ENCODE measurements at regions of chr10 and their contacts with region 1.

Region 1: GRCh38 chr10:91298224-91298871 is 77.9 kb downstream of the PCGF5 start:
- DNase-seq: peak; percentile 86
- ATAC-seq: peak; percentile 95
- H3K4me3 Mint-ChIP-seq: peak overlapping the region; percentile 59
- H3K27ac Mint-ChIP-seq: no peak overlapping the region
- H3K4me1 Mint-ChIP-seq: peaks cover 9% of the 10 kb centered on the region
- H3K27me3 Mint-ChIP-seq: peaks cover 9% of the 10 kb centered on the region
- CTCF ChIP-seq: peak; percentile 92

Region 2: DNA sequence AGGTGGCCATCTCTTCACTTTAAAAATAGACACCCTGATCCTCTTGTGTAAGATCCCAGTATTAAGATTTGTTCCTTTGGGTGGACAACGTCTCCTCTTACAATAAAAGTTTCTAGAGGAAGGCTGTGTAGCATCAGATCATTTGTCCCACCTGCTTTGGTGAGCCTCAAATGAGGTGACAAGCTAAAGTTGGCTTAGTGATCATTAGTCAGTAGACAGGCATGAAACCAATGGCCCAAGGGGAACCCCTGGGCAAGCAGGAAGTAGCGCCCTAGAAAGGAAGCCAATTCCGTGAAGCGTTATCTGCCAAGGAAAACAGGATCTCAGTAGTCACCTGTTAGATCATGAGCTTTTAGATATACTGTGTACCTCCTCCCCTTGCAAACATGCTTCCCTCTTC is 11.1 kb before region 1 on chr10:
- CTCF ChIA-PET with region 1: interaction called, 35 read pairs
- POLR2A ChIA-PET with region 1: interaction called, 3 read pairs
- intact Hi-C with region 1: no loop called
- DNase-seq: no peak
- ATAC-seq: no peak
- H3K4me3 Mint-ChIP-seq: no peak overlapping the region
- H3K27ac Mint-ChIP-seq: no peak overlapping the region
- H3K4me1 Mint-ChIP-seq: no peaks in the 10 kb centered on the region
- H3K27me3 Mint-ChIP-seq: no peaks in the 10 kb centered on the region
- CTCF ChIP-seq: no peak

Region 3: DNA sequence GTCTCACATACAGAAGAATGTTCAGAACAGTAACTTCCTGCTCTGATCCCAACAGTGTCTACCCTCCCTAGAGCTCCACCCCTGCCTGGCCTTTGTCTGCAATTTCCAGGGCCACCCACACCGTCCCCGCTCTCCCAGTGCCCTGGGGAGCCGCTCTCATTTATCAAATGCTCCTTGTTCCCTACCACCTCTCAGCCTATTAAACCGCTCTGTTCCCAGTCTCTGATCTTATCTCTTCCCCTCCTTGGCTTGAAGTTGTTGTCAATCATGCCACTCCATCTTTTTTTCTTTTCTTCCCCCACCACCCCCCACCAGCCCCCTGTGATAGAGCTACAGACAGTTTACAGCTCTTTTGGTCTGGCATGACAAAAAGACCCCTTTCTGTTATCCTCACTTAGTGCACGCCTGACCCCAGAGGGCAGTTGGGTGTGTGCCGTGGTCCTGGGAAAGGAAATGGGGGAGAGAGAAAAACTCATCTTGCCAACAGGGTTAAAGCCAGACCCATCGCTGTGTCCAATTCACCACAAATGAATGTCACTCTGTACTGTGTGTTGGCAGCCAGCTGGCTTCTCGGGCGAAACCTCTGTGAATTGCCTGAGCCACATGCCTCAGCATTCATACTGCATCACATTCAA is 83.0 kb after region 1 on chr10:
- CTCF ChIA-PET with region 1: interaction called, 28 read pairs
- POLR2A ChIA-PET with region 1: no interaction called
- intact Hi-C with region 1: loop called (anchors 5 kb)
- DNase-seq: no peak
- ATAC-seq: no peak
- H3K4me3 Mint-ChIP-seq: no peak overlapping the region
- H3K27ac Mint-ChIP-seq: no peak overlapping the region
- H3K4me1 Mint-ChIP-seq: peaks cover 26% of the 10 kb centered on the region
- H3K27me3 Mint-ChIP-seq: peaks cover 34% of the 10 kb centered on the region
- CTCF ChIP-seq: no peak

Region 4: DNA sequence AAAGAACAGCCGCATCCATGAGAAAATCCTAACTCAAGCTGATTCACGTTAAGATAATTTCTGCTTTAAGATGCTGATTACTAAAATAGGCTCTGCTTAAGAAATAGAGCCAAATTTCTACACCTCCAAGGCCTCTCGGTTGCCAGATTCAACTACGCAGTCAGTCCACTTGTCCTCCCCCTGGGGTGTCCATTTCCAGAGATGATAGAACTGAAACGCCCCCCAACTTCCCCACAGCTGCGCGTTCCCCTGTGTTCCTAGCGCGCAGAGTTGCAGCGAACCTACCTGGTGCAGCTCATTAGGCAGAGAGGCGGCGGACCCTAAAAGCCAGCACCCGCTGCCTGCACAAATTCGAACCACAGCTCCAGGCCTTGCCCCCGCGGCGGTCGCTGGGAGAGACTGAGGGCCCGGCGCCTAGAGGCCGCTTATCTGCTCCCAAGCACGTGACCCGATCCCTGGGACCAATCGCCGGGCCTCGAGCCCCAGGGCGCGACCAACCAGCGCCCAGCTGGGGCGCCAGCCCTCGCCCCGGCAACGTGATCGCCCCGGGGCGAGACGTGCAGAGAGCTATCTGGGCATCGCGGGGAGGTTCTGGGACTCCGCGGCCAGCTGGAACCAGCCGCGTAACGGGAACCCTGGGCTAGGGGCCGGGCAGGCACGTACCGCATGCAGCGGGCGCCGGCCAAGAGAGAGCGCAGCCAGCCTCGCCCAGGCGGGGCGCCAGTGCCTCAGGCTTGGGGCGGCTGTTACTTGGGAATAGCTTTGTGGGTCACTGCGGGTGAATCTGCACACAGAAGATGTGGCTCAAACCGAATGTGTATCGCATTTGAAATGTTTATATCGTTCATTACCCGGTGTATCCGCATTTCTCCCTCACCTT is 334.6 kb after region 1 on chr10 and contains the start of gene PPP1R3C:
- CTCF ChIA-PET with region 1: interaction called, 139 read pairs
- POLR2A ChIA-PET with region 1: no interaction called
- intact Hi-C with region 1: loop called (anchors 5 kb)
- DNase-seq: peak; percentile 70
- ATAC-seq: peak; percentile 87
- H3K4me3 Mint-ChIP-seq: peak within 1 kb of the TSS; percentile 70
- H3K27ac Mint-ChIP-seq: no peak within 1 kb of the TSS
- H3K4me1 Mint-ChIP-seq: peaks cover 4% of the 10 kb centered on the region
- H3K27me3 Mint-ChIP-seq: peaks cover 55% of the 10 kb centered on the region
- CTCF ChIP-seq: no peak
- total RNA-seq, gene PPP1R3C: 0.94 to 0.99 TPM

Region 5: GRCh38 chr10:91908337-91909116 is 610.2 kb after region 1 on chr10:
- CTCF ChIA-PET with region 1: interaction called, 32 read pairs
- POLR2A ChIA-PET with region 1: interaction called, 4 read pairs
- intact Hi-C with region 1: loop called (anchors 5 kb)
- DNase-seq: peak; percentile 80
- ATAC-seq: peak; percentile 88
- H3K4me3 Mint-ChIP-seq: peak overlapping the region; percentile 91
- H3K27ac Mint-ChIP-seq: peak overlapping the region; percentile 88
- H3K4me1 Mint-ChIP-seq: peaks cover 25% of the 10 kb centered on the region
- H3K27me3 Mint-ChIP-seq: peaks cover 3% of the 10 kb centered on the region
- CTCF ChIP-seq: peak; percentile 19